ENCODE measurements at regions of chr10 and their contacts with region 1.

Region 1: DNA sequence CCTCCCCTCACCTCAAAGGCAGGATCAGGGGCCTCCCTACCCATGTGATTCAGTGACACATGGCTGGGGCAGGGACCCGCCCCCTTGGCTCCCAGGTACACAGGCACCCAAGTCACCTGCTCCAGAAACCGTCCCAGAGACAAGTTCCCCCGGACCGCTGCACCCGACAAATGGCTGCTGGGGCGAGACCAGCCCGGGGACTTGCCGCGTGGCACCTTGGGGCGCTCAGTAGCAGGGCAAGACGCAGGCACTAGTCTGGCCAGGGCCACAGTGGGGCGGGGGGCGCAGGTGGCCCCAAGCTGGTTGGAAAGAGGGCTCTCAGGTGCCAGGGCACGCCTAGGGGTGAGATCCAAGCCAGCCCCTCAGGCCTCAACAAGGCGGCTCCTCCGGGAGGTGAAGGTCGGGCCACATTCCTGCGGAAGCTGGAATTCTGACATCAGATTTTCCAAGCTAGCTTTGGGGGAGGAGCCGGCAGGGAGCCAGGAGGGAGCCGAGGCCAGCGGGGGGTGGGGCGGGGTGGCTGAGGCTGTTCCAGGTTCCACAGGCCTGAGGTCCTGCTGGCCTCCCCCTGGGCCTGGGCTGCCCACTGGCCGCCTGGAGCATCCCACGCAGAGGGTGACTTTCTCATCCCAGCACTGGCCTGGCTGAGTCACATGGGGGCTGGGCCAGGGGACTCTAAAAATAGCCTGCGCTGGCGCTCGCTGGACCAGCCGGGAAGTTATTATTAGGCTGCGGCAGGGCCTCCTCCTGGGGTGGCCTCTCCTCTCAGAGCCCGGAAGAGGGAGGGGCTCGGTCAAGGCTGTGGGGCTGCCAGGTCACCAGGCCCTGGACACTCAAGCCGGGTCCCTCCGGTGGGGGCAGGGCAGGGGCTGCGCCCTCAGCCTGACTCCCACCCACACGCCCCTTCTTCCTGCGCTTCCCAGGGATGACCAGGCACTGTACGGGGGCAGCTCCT is 20.5 kb upstream of the INPP5A start:
- DNase-seq: peak; percentile 96
- ATAC-seq: peak; percentile 97
- H3K4me3 ChIP-seq: no peak overlapping the region
- H3K27ac ChIP-seq: peak overlapping the region; percentile 75
- H3K4me1 ChIP-seq: peaks cover 27% of the 10 kb centered on the region
- H3K27me3 ChIP-seq: no peaks in the 10 kb centered on the region
- CTCF ChIP-seq: no peak
- POLR2A ChIP-seq: no peak
- RAD21 ChIP-seq: peak; percentile 27

Region 2: DNA sequence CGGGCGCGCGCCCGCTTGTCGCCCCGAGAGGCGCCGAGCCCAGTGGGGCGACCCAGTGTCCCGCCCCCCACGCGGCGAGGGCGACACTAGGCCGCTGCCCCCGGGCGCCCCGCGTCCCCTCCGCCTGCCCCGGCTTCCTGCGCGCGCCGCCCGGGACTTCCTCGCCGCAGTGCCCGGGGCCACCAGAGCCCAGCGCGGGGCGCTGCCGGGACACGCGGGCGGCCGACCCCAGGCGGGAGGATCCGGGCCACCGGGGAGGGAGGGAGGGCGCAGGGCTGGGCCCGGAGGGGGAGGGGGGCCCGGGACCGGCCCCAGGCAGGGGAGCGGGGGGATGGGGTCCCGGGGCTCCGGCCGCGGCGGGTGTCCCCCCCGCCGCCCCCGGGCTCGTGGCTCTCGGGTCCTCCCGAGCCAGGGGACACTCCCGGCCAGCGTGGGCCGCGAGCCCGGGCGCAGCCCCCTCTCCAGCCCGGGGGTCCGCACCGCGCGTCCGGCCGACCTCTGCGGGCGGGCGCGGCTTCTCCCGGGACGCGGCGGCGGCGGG is 120.5 kb before region 1 on chr10:
- CTCF ChIA-PET with region 1: no interaction called
- POLR2A ChIA-PET with region 1: no interaction called
- dilution Hi-C with region 1: no loop called
- in situ Hi-C with region 1: no loop called
- intact Hi-C with region 1: loop called (anchors 5 kb)
- DNase-seq: peak; percentile 31
- ATAC-seq: peak; percentile 72
- H3K4me3 ChIP-seq: peak overlapping the region; percentile 86
- H3K27ac ChIP-seq: no peak overlapping the region
- H3K4me1 ChIP-seq: peaks cover 21% of the 10 kb centered on the region
- H3K27me3 ChIP-seq: no peaks in the 10 kb centered on the region
- CTCF ChIP-seq: peak; percentile 44
- POLR2A ChIP-seq: 0 out of 2 replicates have a peak, but pooled peaks have one; percentile 34
- RAD21 ChIP-seq: no peak

Measured in IMR-90 (cell line).